ENCODE measurements at regions of chrX and their contacts with region 1.

Region 1: DNA sequence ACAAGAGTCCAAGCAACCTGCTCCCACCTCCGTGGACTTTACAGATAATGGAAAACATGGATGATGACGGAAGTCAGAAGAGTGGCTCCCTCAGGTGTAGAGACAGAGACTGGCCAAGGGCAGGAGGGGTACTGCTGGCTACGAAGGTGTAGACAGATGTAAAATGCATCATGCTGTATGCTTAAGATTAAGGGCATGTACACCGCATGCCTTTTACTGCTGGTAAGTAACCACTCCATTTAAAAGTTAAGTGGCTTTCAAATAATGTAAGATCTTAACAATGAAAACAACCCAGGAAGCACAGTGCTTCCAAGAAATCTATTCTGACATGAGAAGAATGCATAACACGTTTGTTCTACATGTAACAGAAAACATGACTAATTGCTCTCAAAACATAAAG is 76.9 kb upstream of the FAM9B start:
- DNase-seq: no peak
- ATAC-seq: no peak
- H3K4me3 ChIP-seq: no peak overlapping the region
- H3K4me3 Mint-ChIP-seq: no peak overlapping the region
- H3K27ac ChIP-seq: no peak overlapping the region
- H3K27ac Mint-ChIP-seq: no peak overlapping the region
- H3K4me1 ChIP-seq: no peaks in the 10 kb centered on the region
- H3K4me1 Mint-ChIP-seq: peaks cover 0 to 2% (median 0%) of the 10 kb centered on the region in 3 donors
- H3K27me3 ChIP-seq: no peaks in the 10 kb centered on the region
- H3K27me3 Mint-ChIP-seq: no peaks in the 10 kb centered on the region

Region 2: DNA sequence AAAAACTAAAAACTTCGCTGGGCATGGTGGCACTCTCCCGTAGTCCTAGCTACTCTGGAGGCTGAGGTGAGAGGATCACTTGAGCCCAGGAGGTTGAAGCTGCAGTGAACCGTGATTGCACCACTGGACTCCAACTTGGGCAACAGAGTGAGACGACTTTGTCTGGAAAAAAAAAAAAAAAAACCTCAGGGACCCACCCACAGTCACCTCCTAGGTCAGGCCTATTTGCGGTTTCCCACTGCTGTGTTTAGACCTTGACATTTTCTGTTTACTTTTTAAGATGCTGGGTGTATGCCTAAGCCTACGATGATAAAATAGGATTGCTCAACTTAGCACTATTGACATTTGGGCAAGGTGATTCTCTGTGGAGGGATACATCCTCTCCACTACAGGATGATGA is 156.6 kb after region 1 on chrX:
- CTCF ChIA-PET with region 1: interaction called in 1 of 2 experiments, 11 read pairs
- POLR2A ChIA-PET with region 1: no interaction called
- DNase-seq: no peak
- ATAC-seq: no peak
- H3K4me3 ChIP-seq: no peak overlapping the region
- H3K4me3 Mint-ChIP-seq: no peak overlapping the region
- H3K27ac ChIP-seq: no peak overlapping the region
- H3K27ac Mint-ChIP-seq: no peak overlapping the region
- H3K4me1 ChIP-seq: no peaks in the 10 kb centered on the region
- H3K4me1 Mint-ChIP-seq: no peaks in the 10 kb centered on the region
- H3K27me3 ChIP-seq: no peaks in the 10 kb centered on the region
- H3K27me3 Mint-ChIP-seq: peaks cover 0 to 3% of the 10 kb centered on the region in 2 donors

Measured in T-cell (primary cell).